ENCODE measurements at regions of chr11 and their contacts with region 1.

Region 1: GRCh38 chr11:89625171-89625570 is 84.9 kb upstream of the TRIM77 start:
- DNase-seq: no peak
- ATAC-seq: peak; percentile 59
- H3K4me3 ChIP-seq: no peak overlapping the region
- H3K27ac ChIP-seq: no peak overlapping the region
- H3K4me1 ChIP-seq: no peaks in the 10 kb centered on the region
- H3K27me3 ChIP-seq: no peaks in the 10 kb centered on the region
- CTCF ChIP-seq: peak; percentile 35
- EP300 ChIP-seq: no peak
- POLR2A ChIP-seq: no peak
- RAD21 ChIP-seq: no peak

Region 2: GRCh38 chr11:90113541-90113940 is 488.4 kb after region 1 on chr11:
- CTCF ChIA-PET with region 1: no interaction called
- POLR2A ChIA-PET with region 1: no interaction called
- in situ Hi-C with region 1: no loop called
- intact Hi-C with region 1: loop called (anchors 5 kb)
- DNase-seq: no peak
- ATAC-seq: no peak
- H3K4me3 ChIP-seq: no peak overlapping the region
- H3K27ac ChIP-seq: no peak overlapping the region
- H3K4me1 ChIP-seq: no peaks in the 10 kb centered on the region
- H3K27me3 ChIP-seq: no peaks in the 10 kb centered on the region; a peak in 1 of 5 replicates
- CTCF ChIP-seq: peak; percentile 36
- EP300 ChIP-seq: no peak
- POLR2A ChIP-seq: no peak
- RAD21 ChIP-seq: no peak

Measured in HepG2 (cell line).